ENCODE measurements at regions of chr4 and their contacts with region 1.

Region 1: DNA sequence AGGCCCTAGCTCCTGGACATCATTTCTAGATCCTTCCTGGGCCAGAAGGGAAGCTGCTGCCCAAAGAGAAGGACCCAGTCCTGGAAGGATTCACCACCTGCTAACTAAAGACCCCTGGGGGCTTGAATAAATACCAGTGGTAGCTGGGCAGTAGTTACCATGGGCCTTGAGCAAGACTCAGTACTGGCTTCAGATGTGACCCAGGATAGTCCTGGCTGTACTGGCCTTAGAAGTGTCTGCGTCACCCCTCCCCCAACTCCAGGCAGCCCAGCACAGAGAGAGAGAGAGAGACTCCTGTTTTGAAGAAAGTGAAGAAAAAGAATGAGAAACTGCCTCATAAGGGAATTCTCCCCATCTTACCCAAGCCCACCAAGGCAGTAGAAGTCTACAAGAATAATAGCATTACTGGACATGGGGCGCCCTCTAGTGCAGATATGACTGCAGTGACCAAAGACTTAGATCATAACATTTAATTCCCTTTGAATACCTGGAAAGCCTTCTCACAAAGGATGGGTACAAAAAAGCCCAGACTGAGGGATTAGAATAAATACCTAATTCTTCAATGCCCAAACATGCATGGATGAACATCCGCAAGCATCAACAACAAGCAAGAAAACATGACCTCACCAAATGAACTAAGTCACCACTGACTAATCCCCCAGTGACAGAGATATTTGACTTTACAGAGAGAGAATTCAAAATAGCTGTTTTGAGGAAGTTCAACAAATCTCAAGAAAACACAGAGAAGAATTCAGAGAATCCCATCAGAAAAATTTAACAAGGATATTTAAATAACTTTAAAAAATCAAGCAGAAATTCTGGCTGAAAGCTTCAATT is 171.8 kb downstream of the HNRNPD start:
- DNase-seq: peak; percentile 58 to 80
- H3K4me3 ChIP-seq: no peak overlapping the region
- H3K4me1 ChIP-seq: no peaks in the 10 kb centered on the region
- H3K27me3 ChIP-seq: 0 out of 2 replicates have a peak, but pooled peaks cover 2% of the 10 kb centered on the region

Region 2: GRCh38 chr4:81412946-81413495 is 789.0 kb before region 1 on chr4:
- in situ Hi-C with region 1: loop called (anchors 10 kb)
- DNase-seq: no peak
- H3K4me3 ChIP-seq: no peak overlapping the region
- H3K4me1 ChIP-seq: no peaks in the 10 kb centered on the region
- H3K27me3 ChIP-seq: no peaks in the 10 kb centered on the region; the same call in 1 of the 2 replicates

Region 3: DNA sequence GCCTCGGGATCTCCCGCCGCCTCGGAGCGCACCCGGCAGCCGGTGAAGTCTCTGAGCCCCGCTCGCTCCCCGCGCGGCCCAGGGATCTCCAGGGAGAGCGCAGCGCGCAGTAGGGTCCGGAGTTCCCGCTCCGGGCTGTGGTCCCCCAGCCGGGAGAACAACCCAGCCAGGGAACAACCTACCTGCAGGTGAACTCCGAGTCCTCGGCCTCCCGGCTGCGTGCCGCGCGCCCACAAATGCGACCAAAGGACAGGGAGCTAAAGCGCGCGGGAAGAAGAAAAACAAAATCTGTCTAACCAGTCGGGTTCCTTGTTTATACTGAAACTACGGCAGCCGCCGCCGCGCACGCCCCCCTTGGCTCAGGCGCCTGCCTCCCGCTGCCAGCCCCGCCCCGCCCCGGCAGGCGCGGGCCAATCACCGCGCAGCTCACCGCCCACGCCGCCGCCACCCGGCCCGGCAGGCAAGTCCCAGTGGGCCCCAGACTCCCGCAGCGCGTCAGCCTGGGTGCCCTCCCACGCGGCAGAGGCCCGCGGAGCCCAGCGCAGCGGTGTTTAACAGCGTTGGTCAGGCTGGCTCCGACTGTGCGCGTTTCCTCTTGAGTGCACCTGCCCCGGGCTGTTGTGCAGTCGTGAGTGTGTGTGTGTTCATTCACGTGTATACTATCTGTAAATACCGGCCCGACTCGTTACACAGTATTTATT is 730.3 kb before region 1 on chr4 and contains the start of gene RASGEF1B:
- in situ Hi-C with region 1: loop called (anchors 10 kb)
- DNase-seq: peak; percentile 65 to 83
- H3K4me3 ChIP-seq: peak within 1 kb of the TSS; percentile 42
- H3K4me1 ChIP-seq: no peaks in the 10 kb centered on the region
- H3K27me3 ChIP-seq: peaks cover 17% of the 10 kb centered on the region

Region 4: GRCh38 chr4:81676537-81676936 is 525.5 kb before region 1 on chr4:
- in situ Hi-C with region 1: no loop called
- DNase-seq: no peak
- H3K4me3 ChIP-seq: no peak overlapping the region
- H3K4me1 ChIP-seq: no peaks in the 10 kb centered on the region
- H3K27me3 ChIP-seq: peaks cover 5% of the 10 kb centered on the region